Heart left ventricle (tissue), 16 donors: ENCODE measurements at regions of chr4 and their contacts with region 1.

Region 1: GRCh38 chr4:3871181-3871871 is 105.1 kb downstream of the ADRA2C start:
- DNase-seq: no peak
- ATAC-seq: no peak
- H3K4me3 ChIP-seq: peak overlapping the region in 1 of 12 donors; percentile 10
- H3K27ac ChIP-seq: no peak overlapping the region
- H3K4me1 ChIP-seq: peaks cover 0 to 8% (median 0%) of the 10 kb centered on the region in 12 donors
- H3K27me3 ChIP-seq: peaks cover 24 to 75% (median 44%) of the 10 kb centered on the region in 9 donors
- CTCF ChIP-seq: no peak
- POLR2A ChIP-seq: no peak

Region 2: DNA sequence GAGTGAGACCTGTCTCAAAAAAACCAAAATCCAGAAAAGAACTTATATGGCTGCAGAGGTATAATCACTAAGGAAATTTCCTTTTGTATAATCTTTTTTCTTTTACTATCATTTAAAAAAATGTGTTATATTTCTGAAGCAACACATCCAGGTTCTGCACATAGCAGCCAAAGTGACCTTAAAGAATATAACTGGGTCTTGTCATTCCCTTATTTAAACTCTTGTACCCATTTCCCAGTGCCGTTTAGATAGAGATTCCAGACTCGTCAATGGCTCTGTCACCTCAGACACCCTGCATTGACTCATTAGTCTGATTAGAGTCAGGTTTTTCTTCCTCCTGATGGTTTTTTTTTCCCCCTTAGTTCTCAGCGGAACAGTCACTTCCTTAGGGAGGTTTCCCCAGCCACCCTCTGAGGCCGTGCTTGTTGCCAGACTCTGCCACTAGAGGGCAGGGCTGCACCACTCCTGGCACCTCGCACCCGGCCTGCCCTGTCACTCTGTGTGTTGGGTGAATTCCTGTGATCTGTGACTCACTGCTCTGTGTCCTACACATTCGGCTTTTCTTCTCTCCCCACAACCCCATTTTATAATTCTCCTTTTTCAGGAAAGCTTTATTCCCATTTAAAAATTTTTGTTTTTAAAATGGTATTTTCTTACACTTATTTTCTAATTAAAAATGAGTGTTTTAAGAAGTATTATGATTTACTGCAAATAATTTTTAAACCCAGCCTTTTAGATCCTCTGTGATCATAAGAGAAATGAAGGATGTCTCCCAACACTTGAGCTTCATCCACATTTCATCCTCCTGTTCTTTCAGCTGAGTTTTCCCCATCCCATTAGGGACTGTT is 764.8 kb before region 1 on chr4:
- intact Hi-C with region 1: loop called in 1 of 10 experiments (anchors 10 kb)
- DNase-seq: peak; percentile 86 to 92 (median 86)
- ATAC-seq: peak; percentile 95 to 99 (median 98)
- H3K4me3 ChIP-seq: no peak overlapping the region
- H3K27ac ChIP-seq: peak overlapping the region in 7 of 12 donors; percentile 11 to 63 (median 39)
- H3K4me1 ChIP-seq: peaks cover 0 to 35% (median 22%) of the 10 kb centered on the region in 12 donors
- H3K27me3 ChIP-seq: no peaks in the 10 kb centered on the region
- CTCF ChIP-seq: peak; percentile 93 to 98 (median 98)
- POLR2A ChIP-seq: no peak

Region 3: DNA sequence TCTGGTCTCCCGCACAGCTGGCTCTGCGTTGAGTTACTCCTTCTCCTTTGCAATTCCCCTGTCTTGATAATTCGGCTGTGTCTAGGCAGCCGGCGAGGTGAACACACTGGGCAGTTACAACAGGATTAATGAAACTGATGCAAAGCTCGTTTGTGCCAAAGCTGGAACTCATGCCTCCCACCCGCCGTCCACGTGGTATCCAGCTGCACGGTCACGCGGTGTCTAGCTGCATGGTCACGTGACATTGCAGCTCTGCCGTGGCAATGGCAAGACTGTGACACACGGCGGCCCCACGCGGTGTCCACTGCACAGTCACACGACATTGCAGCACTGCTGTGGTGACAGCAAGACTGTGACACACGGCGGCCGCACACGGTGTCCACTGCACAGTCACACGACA is 307.9 kb before region 1 on chr4:
- intact Hi-C with region 1: loop called in 1 of 10 experiments (anchors 10 kb)
- DNase-seq: peak in 1 of 5 donors; percentile 49
- ATAC-seq: no peak
- H3K4me3 ChIP-seq: no peak overlapping the region
- H3K27ac ChIP-seq: no peak overlapping the region
- H3K4me1 ChIP-seq: no peaks in the 10 kb centered on the region
- H3K27me3 ChIP-seq: no peaks in the 10 kb centered on the region
- CTCF ChIP-seq: no peak
- POLR2A ChIP-seq: no peak

Region 4: GRCh38 chr4:3572363-3572762 is 299.0 kb before region 1 on chr4:
- intact Hi-C with region 1: loop called in 2 of 10 experiments (anchors 10 kb)
- DNase-seq: peak in 1 of 5 donors; percentile 34
- ATAC-seq: no peak
- H3K4me3 ChIP-seq: no peak overlapping the region
- H3K27ac ChIP-seq: no peak overlapping the region
- H3K4me1 ChIP-seq: no peaks in the 10 kb centered on the region
- H3K27me3 ChIP-seq: peaks cover 0 to 8% (median 0%) of the 10 kb centered on the region in 9 donors
- CTCF ChIP-seq: no peak
- POLR2A ChIP-seq: no peak

Region 5: DNA sequence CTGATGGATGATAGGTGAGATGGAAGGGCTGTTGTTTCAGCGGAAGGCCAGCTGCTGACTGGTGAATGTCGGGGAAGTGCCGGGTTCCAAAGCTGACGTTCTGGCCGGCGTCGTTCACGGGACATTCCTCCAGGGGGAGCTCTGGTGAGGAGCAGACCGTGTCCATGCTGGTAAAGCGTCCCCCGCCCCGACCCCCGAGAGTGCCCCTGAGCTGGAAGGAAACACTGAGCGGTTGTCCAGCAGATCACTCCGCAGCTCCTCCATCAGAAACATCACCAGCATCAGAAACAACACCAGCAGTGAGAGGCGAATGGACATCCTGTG is 123.8 kb before region 1 on chr4:
- intact Hi-C with region 1: loop called in 2 of 10 experiments (anchors 5 to 10 kb)
- DNase-seq: no peak
- ATAC-seq: peak in 1 of 4 donors; percentile 28
- H3K4me3 ChIP-seq: no peak overlapping the region
- H3K27ac ChIP-seq: no peak overlapping the region
- H3K4me1 ChIP-seq: peaks cover 0 to 4% (median 0%) of the 10 kb centered on the region in 12 donors
- H3K27me3 ChIP-seq: peaks cover 11 to 56% (median 37%) of the 10 kb centered on the region in 9 donors
- CTCF ChIP-seq: peak in 11 of 12 donors; percentile 12 to 54 (median 32)
- POLR2A ChIP-seq: no peak

Region 6: DNA sequence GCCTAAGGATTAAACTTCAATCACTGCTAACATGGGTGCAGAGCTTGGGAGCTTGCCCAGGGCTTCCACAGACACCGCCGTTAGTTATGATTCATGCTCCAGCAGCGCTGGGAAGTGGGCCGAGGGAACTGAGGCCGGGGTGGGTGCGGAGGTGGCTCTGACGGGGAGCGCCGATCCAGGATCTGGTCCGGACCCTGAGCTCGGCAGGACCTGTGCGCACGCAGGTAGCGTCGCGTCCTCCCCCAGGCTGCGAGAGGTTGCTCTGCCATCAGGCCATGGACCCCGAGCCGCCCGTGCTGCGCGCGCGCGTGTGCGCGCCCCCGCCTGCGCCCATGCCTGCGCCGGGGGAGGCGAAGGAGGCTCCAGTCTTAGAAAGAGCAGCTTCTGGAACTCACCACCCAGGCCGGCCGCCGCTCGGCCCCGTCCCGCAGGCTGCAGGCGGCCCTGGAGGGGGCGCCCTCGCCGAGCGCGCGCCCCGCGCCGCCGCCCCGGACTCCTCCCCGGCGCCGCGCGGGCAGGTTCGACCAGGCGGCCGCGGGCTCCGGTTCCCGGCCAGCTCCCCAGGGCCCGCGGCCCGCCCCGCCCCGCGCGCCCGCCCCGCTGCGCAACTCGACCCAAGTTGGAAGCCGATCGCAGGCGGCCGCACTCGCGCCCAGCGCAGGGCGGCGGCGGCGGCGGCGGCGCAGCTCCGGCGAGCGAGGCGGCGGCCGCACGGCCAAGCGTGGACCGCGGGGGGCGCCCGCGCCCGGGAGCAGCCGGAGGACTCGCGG is 105.9 kb before region 1 on chr4:
- intact Hi-C with region 1: loop called in 2 of 10 experiments (anchors 10 kb)
- DNase-seq: peak in 3 of 5 donors; percentile 26 to 42 (median 38)
- ATAC-seq: peak; percentile 19 to 73 (median 52)
- H3K4me3 ChIP-seq: peak overlapping the region in 11 of 12 donors; percentile 22 to 56 (median 47)
- H3K27ac ChIP-seq: peak overlapping the region in 5 of 12 donors; percentile 29 to 70 (median 39)
- H3K4me1 ChIP-seq: peaks cover 0 to 13% (median 0%) of the 10 kb centered on the region in 12 donors
- H3K27me3 ChIP-seq: peaks cover 13 to 54% (median 28%) of the 10 kb centered on the region in 9 donors
- CTCF ChIP-seq: peak in 8 of 12 donors; percentile 5 to 45 (median 25)
- POLR2A ChIP-seq: no peak

Region 7: GRCh38 chr4:3783406-3784306 is 87.7 kb before region 1 on chr4:
- intact Hi-C with region 1: loop called in 1 of 10 experiments (anchors 10 kb)
- DNase-seq: peak in 1 of 5 donors; percentile 56
- ATAC-seq: no peak
- H3K4me3 ChIP-seq: no peak overlapping the region
- H3K27ac ChIP-seq: no peak overlapping the region
- H3K4me1 ChIP-seq: no peaks in the 10 kb centered on the region
- H3K27me3 ChIP-seq: peaks cover 0 to 50% (median 14%) of the 10 kb centered on the region in 9 donors
- CTCF ChIP-seq: peak in 8 of 12 donors; percentile 11 to 40 (median 23)
- POLR2A ChIP-seq: no peak